ENCODE measurements at regions of chr14 and their contacts with region 1.

Region 1: GRCh38 chr14:59028476-59029202 is 159.8 kb upstream of the DAAM1 start:
- DNase-seq: peak; percentile 31
- ATAC-seq: peak; percentile 100
- H3K4me3 ChIP-seq: no peak overlapping the region
- H3K27ac ChIP-seq: no peak overlapping the region
- H3K4me1 ChIP-seq: no peaks in the 10 kb centered on the region
- H3K27me3 ChIP-seq: no peaks in the 10 kb centered on the region
- CTCF ChIP-seq: peak; percentile 88 to 94 (median 91)
- EP300 ChIP-seq: no peak
- POLR2A ChIP-seq: no peak
- RAD21 ChIP-seq: peak; percentile 85

Region 2: GRCh38 chr14:58954901-58955861 is 73.5 kb before region 1 on chr14:
- CTCF ChIA-PET with region 1: no interaction called
- POLR2A ChIA-PET with region 1: no interaction called
- RAD21 ChIA-PET with region 1: interaction called, 10 read pairs
- SMC1A ChIA-PET with region 1: interaction called, 3 read pairs
- in situ Hi-C with region 1: no loop called
- intact Hi-C with region 1: loop called (anchors 2 kb)
- DNase-seq: peak; percentile 55
- ATAC-seq: peak; percentile 81
- H3K4me3 ChIP-seq: peak overlapping the region; percentile 38; the same call in 1 of the 2 replicates
- H3K27ac ChIP-seq: peak overlapping the region; percentile 86
- H3K4me1 ChIP-seq: peaks cover 18% of the 10 kb centered on the region
- H3K27me3 ChIP-seq: no peaks in the 10 kb centered on the region
- CTCF ChIP-seq: no peak
- EP300 ChIP-seq: peak; percentile 68 to 77; a peak in 3 of 4 replicates
- POLR2A ChIP-seq: no peak
- RAD21 ChIP-seq: no peak

Region 3: DNA sequence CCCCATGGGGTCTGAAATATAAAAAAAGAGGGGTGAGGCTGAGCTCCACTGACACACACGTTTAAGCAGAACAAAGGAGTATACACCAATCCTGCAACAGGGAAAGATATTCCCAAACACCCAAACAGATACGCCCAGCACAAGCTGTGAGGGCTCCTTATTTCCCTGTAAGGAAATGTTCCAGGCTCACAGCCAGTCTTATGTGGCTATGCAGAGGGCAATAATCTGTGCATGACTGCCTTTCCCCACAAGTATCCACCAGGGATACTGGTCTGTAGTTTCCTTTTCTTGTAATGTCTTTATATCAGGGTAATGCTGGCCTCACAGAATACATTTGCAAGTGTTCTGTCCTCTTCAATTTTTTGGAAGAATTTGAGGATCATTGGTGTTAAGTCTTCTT is 18.1 kb after region 1 on chr14:
- CTCF ChIA-PET with region 1: interaction called, 10 read pairs
- POLR2A ChIA-PET with region 1: interaction called, 4 read pairs
- RAD21 ChIA-PET with region 1: interaction called, 3 read pairs
- SMC1A ChIA-PET with region 1: interaction called, 13 read pairs
- in situ Hi-C with region 1: no loop called
- intact Hi-C with region 1: no loop called
- DNase-seq: no peak
- ATAC-seq: no peak
- H3K4me3 ChIP-seq: no peak overlapping the region
- H3K27ac ChIP-seq: no peak overlapping the region
- H3K4me1 ChIP-seq: no peaks in the 10 kb centered on the region
- H3K27me3 ChIP-seq: no peaks in the 10 kb centered on the region
- CTCF ChIP-seq: no peak
- EP300 ChIP-seq: no peak
- POLR2A ChIP-seq: no peak
- RAD21 ChIP-seq: no peak

Region 4: GRCh38 chr14:59055439-59056045 is 26.9 kb after region 1 on chr14:
- CTCF ChIA-PET with region 1: interaction called, 19 read pairs
- POLR2A ChIA-PET with region 1: no interaction called
- RAD21 ChIA-PET with region 1: interaction called, 9 read pairs
- SMC1A ChIA-PET with region 1: interaction called, 17 read pairs
- in situ Hi-C with region 1: no loop called
- intact Hi-C with region 1: loop called (anchors 1 kb)
- DNase-seq: peak; percentile 7
- ATAC-seq: peak; percentile 97
- H3K4me3 ChIP-seq: no peak overlapping the region
- H3K27ac ChIP-seq: no peak overlapping the region
- H3K4me1 ChIP-seq: no peaks in the 10 kb centered on the region
- H3K27me3 ChIP-seq: no peaks in the 10 kb centered on the region
- CTCF ChIP-seq: peak; percentile 67 to 85 (median 74)
- EP300 ChIP-seq: no peak
- POLR2A ChIP-seq: no peak
- RAD21 ChIP-seq: peak; percentile 90

Region 5: DNA sequence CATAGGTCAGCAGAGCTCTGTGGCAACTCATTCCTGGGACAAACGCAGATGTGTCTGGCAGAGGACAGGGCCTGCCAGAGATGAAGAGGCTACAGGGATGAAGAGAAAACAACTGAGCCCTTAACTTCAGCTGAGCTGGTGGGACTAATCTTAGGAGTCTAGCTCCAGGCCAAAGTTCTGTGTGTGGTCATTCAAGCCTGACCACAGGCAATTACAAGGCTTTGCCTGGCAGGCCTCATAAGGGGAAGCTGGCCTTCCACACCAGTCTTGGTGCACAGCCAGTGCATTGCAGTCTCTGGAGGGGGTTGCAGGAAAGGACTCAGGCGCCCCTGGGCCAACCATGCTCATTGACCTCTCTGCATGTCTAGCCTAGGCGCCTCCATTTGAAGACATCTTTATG is 32.2 kb after region 1 on chr14:
- CTCF ChIA-PET with region 1: interaction called, 19 read pairs
- POLR2A ChIA-PET with region 1: no interaction called
- RAD21 ChIA-PET with region 1: interaction called, 9 read pairs
- SMC1A ChIA-PET with region 1: interaction called, 17 read pairs
- in situ Hi-C with region 1: no loop called
- intact Hi-C with region 1: no loop called
- DNase-seq: no peak
- ATAC-seq: peak; percentile 93
- H3K4me3 ChIP-seq: no peak overlapping the region
- H3K27ac ChIP-seq: no peak overlapping the region
- H3K4me1 ChIP-seq: no peaks in the 10 kb centered on the region
- H3K27me3 ChIP-seq: no peaks in the 10 kb centered on the region
- CTCF ChIP-seq: no peak
- EP300 ChIP-seq: no peak
- POLR2A ChIP-seq: no peak
- RAD21 ChIP-seq: no peak

Region 6: GRCh38 chr14:59116984-59117415 is 88.4 kb after region 1 on chr14:
- CTCF ChIA-PET with region 1: interaction called, 6 read pairs
- POLR2A ChIA-PET with region 1: no interaction called
- RAD21 ChIA-PET with region 1: interaction called, 12 read pairs
- SMC1A ChIA-PET with region 1: interaction called, 10 read pairs
- in situ Hi-C with region 1: no loop called
- intact Hi-C with region 1: no loop called
- DNase-seq: peak; percentile 44
- ATAC-seq: peak; percentile 95
- H3K4me3 ChIP-seq: no peak overlapping the region
- H3K27ac ChIP-seq: no peak overlapping the region
- H3K4me1 ChIP-seq: no peaks in the 10 kb centered on the region
- H3K27me3 ChIP-seq: no peaks in the 10 kb centered on the region; a peak in 1 of 4 replicates
- CTCF ChIP-seq: no peak
- EP300 ChIP-seq: peak; percentile 18 to 79; a peak in 3 of 4 replicates
- POLR2A ChIP-seq: no peak
- RAD21 ChIP-seq: no peak

Region 7: DNA sequence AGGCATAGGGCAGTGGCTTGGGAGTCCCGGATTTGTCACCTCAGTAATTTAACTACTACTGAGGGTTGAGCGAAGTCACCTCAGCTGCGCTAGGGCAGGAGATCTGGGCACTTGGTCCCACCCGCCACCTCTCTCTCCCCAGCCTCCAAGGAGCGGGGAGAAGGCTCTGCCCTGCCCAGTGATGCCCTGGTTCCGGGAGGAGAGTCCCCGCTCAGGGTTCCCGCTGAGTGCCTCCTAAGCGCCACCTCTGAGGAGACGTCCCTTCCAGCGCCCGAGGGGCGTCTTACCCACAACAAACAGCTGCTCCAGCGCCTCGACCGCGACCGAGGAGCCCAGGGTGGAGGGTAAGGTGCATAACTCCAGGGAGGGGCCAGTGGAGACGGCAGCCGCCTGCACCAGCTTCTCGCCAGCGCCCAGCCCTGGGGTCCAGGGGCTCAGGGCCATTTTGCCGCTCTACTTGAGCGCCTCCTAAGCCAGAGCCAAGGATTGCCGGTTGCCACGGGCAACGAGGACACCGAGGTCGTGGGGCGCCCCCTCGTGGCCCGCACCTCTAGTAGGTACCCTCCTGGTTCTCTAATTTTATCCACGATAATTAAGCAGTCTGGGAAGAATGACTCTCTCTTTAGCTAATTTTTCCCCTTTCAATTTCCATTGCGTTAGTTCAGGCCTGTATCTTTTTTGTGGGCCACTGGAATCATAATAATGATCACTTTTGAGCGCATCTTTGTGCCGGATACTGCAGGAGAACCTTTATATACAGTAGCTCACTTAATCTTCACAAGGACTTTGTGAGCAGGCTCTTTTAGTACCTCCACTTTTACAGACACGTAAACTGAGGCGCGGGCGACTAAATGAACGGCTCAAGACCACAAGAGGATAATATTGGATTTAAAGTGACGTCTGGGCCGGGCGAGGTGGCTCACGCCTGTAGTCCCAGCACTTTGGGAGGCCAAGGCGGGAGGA is 548.0 kb after region 1 on chr14 and contains the start of gene CCDC175:
- CTCF ChIA-PET with region 1: no interaction called
- POLR2A ChIA-PET with region 1: no interaction called
- RAD21 ChIA-PET with region 1: no interaction called
- SMC1A ChIA-PET with region 1: no interaction called
- in situ Hi-C with region 1: no loop called
- intact Hi-C with region 1: loop called (anchors 2 kb)
- DNase-seq: peak; percentile 7
- ATAC-seq: peak; percentile 99
- H3K4me3 ChIP-seq: peak within 1 kb of the TSS; percentile 52; the same call in 1 of the 2 replicates
- H3K27ac ChIP-seq: no peak within 1 kb of the TSS
- H3K4me1 ChIP-seq: no peaks in the 10 kb centered on the region; the same call in 1 of the 2 replicates
- H3K27me3 ChIP-seq: peaks cover 0 to 5% of the 10 kb centered on the region in 2 experiments; a peak in 3 of 4 replicates
- CTCF ChIP-seq: peak; percentile 80 to 88 (median 85)
- EP300 ChIP-seq: no peak
- POLR2A ChIP-seq: no peak
- RAD21 ChIP-seq: peak; percentile 75
- polyA plus RNA-seq, gene CCDC175: not detected

Region 8: GRCh38 chr14:59632381-59632780 is 603.7 kb after region 1 on chr14:
- CTCF ChIA-PET with region 1: no interaction called
- POLR2A ChIA-PET with region 1: no interaction called
- RAD21 ChIA-PET with region 1: no interaction called
- SMC1A ChIA-PET with region 1: no interaction called
- in situ Hi-C with region 1: no loop called
- intact Hi-C with region 1: no loop called
- DNase-seq: no peak
- ATAC-seq: peak; percentile 81
- H3K4me3 ChIP-seq: no peak overlapping the region
- H3K27ac ChIP-seq: no peak overlapping the region
- H3K4me1 ChIP-seq: no peaks in the 10 kb centered on the region
- H3K27me3 ChIP-seq: peaks cover 3 to 4% of the 10 kb centered on the region in 2 experiments; a peak in 3 of 4 replicates
- CTCF ChIP-seq: peak; percentile 52 to 61 (median 56); a peak in 5 of 6 replicates
- EP300 ChIP-seq: no peak
- POLR2A ChIP-seq: no peak
- RAD21 ChIP-seq: peak; percentile 64

Measured in GM12878 (cell line).